ENCODE measurements at regions of chr1 and their contacts with region 1.

Region 1: GRCh38 chr1:21508580-21509350 is 458 bp upstream of the ALPL start:
- DNase-seq: peak; percentile 76 to 87
- H3K4me3 ChIP-seq: peak overlapping the region; percentile 32 to 46 (median 39)
- H3K27ac ChIP-seq: no peak overlapping the region
- H3K4me1 ChIP-seq: peaks cover 12 to 30% (median 20%) of the 10 kb centered on the region in 4 donors
- H3K27me3 ChIP-seq: peaks cover 5 to 70% (median 21%) of the 10 kb centered on the region in 3 donors
- CTCF ChIP-seq: peak in 4 of 7 experiments; percentile 25 to 80 (median 48)
- EP300 ChIP-seq: no peak
- POLR2A ChIP-seq: no peak

Region 2: GRCh38 chr1:21149862-21150432 is 358.8 kb before region 1 on chr1:
- intact Hi-C with region 1: no loop called
- DNase-seq: peak in 1 of 2 donors; percentile 62
- H3K4me3 ChIP-seq: no peak overlapping the region
- H3K27ac ChIP-seq: peak overlapping the region; percentile 3 to 57 (median 28)
- H3K4me1 ChIP-seq: peaks cover 8 to 31% (median 19%) of the 10 kb centered on the region in 4 donors
- H3K27me3 ChIP-seq: no peaks in the 10 kb centered on the region
- CTCF ChIP-seq: no peak
- EP300 ChIP-seq: no peak
- POLR2A ChIP-seq: no peak

Region 3: GRCh38 chr1:21573971-21574465 is 65.3 kb after region 1 on chr1:
- intact Hi-C with region 1: loop called (anchors 10 kb)
- DNase-seq: peak; percentile 80 to 89
- H3K4me3 ChIP-seq: no peak overlapping the region
- H3K27ac ChIP-seq: peak overlapping the region in 4 of 5 donors; percentile 22 to 74 (median 59)
- H3K4me1 ChIP-seq: peaks cover 7 to 15% (median 14%) of the 10 kb centered on the region in 4 donors
- H3K27me3 ChIP-seq: peaks cover 0 to 23% (median 0%) of the 10 kb centered on the region in 3 donors
- CTCF ChIP-seq: peak in 4 of 7 experiments; percentile 14 to 48 (median 36)
- EP300 ChIP-seq: no peak
- POLR2A ChIP-seq: no peak

Region 4: DNA sequence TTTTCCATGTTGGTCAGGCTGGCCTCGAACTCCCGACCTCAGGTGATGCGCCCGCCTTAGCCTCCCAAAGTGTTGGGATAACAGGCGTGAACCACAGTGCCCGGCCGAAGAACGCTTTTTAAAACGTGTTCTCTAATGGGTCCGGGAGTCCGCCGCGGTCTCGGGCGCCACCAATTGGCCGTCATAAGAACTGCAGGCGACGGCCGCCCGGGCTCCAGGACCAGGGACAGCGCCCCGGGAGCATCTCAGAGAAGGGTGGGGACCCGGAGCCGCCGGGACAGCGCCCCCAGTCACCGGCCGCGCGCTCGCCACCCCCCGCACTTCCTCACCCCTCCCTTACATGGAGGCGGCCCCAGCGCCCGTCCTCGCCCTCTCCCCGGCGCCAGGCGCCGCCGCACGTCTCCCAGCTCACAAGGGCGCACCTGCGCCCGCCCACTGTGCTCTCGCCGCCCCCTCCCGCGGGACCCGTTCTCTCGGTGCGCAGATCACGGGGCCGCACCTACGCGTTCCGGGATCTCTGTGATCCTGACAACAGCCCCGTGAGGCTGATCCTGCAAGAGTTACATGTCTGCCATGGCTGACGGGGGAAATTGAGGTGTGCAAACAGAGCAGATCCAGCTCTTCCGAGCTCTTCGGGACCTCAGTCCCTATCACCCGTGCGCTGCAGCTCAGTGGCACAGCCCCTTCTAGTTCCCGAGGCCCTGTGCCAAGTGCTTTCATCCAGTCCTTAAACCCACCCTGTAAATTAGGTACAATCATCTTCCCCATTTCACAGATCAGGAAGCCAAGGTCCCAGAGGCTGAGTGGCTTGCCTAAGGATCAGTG is 150.5 kb after region 1 on chr1:
- intact Hi-C with region 1: loop called (anchors 10 kb)
- DNase-seq: peak; percentile 88 to 94
- H3K4me3 ChIP-seq: peak overlapping the region in 3 of 4 donors; percentile 10 to 25 (median 14)
- H3K27ac ChIP-seq: no peak overlapping the region
- H3K4me1 ChIP-seq: peaks cover 5 to 20% (median 10%) of the 10 kb centered on the region in 4 donors
- H3K27me3 ChIP-seq: peaks cover 0 to 49% (median 8%) of the 10 kb centered on the region in 3 donors
- CTCF ChIP-seq: peak in 5 of 7 experiments; percentile 90 to 97 (median 96)
- EP300 ChIP-seq: no peak
- POLR2A ChIP-seq: no peak

Region 5: DNA sequence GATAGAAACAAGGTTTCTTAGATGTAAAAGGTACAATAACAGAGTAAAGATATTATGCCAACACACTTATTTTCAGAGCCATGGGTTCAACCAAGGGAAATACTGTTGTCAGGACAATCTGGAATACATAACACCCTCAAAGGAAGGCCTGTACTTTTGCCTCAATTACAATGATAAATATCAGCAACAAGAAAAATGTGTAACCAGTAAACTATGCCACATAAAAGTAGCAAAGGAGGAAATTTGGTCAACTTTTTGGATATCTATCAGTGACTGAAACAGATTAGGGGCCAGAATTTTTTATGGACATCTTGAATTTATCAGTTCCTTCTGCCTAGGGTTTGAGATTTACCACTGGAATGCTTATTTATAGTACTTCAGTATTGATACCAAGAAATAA is 185.0 kb after region 1 on chr1:
- intact Hi-C with region 1: no loop called
- DNase-seq: no peak
- H3K4me3 ChIP-seq: no peak overlapping the region
- H3K27ac ChIP-seq: no peak overlapping the region
- H3K4me1 ChIP-seq: no peaks in the 10 kb centered on the region
- H3K27me3 ChIP-seq: no peaks in the 10 kb centered on the region
- CTCF ChIP-seq: no peak
- EP300 ChIP-seq: no peak
- POLR2A ChIP-seq: no peak